Sciatic nerve (tissue), 2 donors: ENCODE measurements at regions of chr9 and their contacts with region 1.

Region 1: DNA sequence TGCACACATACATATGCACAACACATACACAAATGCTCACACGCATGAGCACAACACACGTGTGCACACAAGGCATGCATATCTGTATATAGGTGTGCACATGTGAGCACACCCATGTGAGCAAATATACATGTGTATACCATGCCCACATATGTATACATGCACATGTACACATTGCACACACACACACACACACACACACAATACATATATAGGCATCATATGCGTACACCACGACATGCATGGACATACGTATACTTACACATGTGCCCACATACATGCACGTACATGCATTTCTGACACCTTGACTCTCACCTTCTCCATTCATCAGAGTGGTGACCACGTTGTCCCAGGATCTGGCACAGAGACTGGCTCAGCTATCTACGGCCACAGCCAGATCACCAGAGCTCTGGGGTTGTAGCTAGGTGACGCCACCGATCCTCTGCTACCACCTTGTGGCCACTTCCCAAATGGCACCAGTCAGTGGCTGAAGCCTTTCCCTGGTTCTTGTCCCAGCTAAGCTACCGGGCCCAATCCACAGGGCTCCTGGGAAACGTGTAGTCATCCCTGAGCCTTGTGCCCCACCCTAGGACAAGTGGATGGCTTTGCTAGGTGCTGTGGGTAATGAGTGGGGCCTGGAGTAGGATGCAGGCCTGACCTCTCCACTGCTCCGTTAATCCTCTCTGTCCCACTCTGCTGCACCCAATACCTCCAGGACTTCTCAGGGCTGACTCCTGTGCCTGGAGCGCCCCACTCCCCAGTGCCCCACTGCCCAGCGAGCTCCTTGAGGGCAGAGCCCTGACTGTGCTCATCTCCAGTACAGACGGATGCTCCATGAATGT is 194.4 kb downstream of the RGS3 start:
- DNase-seq: peak; percentile 93
- ATAC-seq: peak; percentile 88

Region 2: DNA sequence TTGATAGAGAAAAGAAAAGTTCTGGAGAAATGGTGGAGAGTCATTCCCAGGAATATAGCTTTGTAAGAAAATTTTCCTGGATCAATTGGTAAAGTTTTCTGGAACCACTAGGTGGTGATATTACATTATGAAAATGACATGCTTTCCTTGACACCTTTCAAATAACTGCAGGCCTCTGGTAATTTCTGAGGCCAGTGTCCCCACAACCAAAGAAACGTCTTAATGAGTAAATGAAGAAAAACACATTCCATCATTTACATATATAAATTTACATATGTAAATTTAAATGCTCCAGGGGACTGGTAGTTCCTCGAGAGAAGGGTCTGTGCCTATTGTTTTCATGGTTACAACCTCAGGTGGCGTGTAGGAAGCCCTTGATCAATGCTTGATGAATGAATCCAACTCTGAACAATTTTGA is 211.6 kb before region 1 on chr9:
- intact Hi-C with region 1: loop called (anchors 10 kb)
- DNase-seq: no peak
- ATAC-seq: peak; percentile 56

Region 3: DNA sequence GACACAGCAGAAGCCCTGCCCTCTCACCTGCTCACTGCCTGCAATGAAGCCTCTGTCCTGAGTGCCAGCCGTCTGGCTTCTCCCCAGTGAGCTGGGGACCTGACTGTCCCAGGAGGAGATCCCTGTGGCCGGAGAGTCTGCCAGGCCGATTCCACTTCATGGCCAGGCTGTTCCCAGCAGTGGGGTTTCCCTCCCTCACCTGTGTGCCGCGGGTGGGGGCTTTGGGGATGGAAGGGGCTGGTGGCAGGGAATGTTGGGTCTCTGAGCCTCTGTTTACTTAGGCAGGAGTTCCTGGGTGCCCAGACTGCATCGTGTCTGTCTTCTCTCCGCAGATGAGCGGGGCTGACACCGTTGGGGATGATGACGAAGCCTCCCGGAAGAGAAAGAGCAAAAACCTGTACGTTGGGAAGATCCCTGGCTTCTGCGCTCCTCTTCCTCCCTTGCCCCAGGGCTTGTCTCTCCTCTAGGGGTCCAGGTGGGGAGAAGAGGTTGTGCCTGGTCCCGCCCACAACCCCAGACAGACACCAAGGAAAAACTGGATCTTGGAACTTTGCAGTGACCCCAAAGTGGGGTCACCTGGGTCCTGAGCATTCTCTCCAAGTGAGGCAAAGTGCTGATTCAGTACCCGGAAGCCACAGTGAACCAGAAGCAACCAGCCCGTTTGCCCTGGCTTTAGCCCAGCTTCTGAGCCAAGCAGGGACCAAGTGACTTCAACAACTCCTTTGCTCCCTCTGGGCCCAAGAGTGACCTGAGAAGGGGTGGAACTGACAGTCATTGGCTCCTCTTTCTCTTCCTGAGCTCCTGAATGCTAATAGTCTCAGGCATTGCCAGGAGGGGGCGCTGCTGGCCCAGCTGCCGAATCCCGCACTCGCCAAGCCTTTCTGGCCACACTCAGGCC is 66.7 kb before region 1 on chr9:
- intact Hi-C with region 1: loop called (anchors 2 kb)
- DNase-seq: peak; percentile 91
- ATAC-seq: peak; percentile 65

Region 4: DNA sequence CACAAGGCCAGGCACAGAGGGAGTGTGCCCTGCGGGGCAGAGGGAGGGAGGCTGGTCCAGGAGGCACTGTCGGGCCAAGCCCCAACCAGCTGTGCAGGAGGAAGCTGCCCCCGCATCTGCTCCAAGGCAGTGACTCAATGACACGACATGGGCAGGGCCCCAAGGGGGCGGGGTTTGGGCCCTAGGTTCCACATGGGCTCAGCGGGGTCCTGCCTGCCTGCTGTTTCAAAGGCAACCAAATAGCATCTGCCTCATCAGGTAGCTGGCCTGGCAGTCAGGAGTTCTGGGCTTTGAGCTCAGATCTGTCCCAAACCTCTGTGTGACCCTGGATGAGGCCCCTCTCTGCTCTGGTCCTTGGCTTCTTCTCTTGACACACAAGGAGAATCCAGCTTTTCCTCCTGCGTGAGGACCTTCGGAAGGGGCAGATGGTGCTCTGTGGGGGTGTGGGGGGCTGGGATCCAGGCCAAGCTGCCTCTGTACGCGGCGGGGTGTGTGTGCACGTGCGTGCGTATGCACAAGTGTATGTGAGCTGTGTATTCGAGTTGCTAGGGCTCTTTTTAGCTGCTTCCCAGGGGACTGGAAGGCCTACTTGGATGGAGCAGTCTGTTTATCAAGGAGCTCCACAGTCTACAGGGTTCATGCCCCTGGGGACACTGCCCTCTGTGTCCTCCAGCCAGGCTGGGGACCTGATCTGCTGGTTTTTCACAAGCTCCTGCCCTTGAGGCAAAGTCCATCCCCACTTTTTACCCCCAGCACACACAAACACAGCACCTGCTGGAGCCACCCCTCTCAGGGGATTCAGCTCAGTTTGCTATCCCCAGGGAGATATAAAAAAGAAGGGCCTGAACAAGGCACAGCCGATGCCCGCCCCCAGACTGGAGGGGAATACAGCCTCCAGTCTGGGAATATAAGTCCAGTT is 55.5 kb before region 1 on chr9:
- intact Hi-C with region 1: no loop called
- DNase-seq: peak; percentile 84
- ATAC-seq: peak; percentile 75

Region 5: GRCh38 chr9:113687680-113688371 is 29.9 kb after region 1 on chr9:
- intact Hi-C with region 1: no loop called
- DNase-seq: no peak
- ATAC-seq: peak; percentile 31

Region 6: DNA sequence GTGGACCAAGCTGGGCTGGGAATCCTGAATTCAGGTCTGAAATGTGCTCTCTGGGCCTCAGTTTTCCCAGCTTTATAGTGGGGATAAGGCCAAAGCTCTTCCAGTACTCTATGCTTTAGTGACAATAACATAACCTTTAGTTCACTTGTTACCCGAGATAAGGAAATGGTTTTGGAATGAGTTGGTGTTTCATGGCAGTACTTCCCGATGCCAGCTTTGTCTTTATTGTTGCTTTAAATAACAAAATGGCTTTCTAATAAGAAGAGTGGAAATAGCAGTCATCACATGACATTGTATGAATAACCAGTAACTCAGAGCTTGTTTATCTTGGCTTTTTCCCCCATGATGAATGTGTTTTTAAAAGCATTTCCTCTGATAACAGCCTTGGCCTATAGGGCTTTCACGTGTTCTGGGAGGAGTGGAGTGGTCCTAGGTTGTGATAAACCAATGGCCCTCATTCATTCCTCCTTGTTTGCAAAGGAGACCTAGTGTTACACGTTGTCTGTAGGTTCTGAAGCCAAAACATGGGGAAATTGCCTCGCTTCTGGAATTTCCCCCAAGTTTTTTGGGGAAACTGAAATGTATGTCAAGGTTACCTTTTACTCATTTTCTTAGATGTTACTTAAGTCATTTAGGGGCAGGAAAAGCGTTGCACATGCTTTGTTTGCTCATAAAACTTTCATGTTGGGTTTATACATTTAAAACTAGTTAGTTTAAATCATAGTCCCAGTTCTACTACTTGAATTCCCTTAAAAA is 271.9 kb after region 1 on chr9:
- intact Hi-C with region 1: no loop called
- DNase-seq: no peak
- ATAC-seq: no peak